HepG2 (cell line): ENCODE measurements at regions of chr16 and their contacts with region 1.

Region 1: GRCh38 chr16:68848786-68849185 is 5.5 kb downstream of the TANGO6 start:
- DNase-seq: no peak
- ATAC-seq: no peak
- H3K4me3 ChIP-seq: no peak overlapping the region
- H3K27ac ChIP-seq: no peak overlapping the region
- H3K4me1 ChIP-seq: peaks cover 20% of the 10 kb centered on the region
- H3K27me3 ChIP-seq: no peaks in the 10 kb centered on the region; a peak in 1 of 5 replicates
- CTCF ChIP-seq: no peak
- EP300 ChIP-seq: no peak
- POLR2A ChIP-seq: no peak
- RAD21 ChIP-seq: no peak

Region 2: GRCh38 chr16:68902008-68902968 is 53.5 kb after region 1 on chr16:
- CTCF ChIA-PET with region 1: no interaction called
- POLR2A ChIA-PET with region 1: no interaction called
- in situ Hi-C with region 1: no loop called
- intact Hi-C with region 1: loop called (anchors 5 kb)
- DNase-seq: peak; percentile 63
- ATAC-seq: peak; percentile 74
- H3K4me3 ChIP-seq: no peak overlapping the region
- H3K27ac ChIP-seq: no peak overlapping the region
- H3K4me1 ChIP-seq: no peaks in the 10 kb centered on the region
- H3K27me3 ChIP-seq: no peaks in the 10 kb centered on the region
- CTCF ChIP-seq: peak; percentile 80
- EP300 ChIP-seq: no peak
- POLR2A ChIP-seq: no peak
- RAD21 ChIP-seq: peak; percentile 85